ENCODE measurements at regions of chr15 and their contacts with region 1.

Region 1: DNA sequence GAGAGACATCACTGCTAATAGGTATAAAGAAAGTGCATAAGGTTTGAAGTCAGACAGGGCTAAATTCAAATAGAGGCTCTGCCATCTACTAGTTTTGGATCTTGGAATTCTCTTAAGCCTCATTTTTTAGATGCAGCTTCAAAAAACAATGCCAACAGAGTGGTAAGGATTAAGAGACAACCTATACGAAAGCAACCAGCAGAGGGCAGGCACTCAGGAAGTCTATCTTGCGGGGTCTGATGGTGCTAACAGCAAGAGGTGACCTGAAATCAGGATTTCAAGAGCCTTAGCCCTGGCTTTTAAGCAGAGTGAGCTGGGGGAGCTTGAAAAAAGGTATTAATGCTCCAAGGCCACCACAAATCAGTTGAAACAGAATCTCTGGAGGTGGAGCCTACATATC is 40.7 kb downstream of the LDHAL6B start:
- DNase-seq: no peak
- H3K4me3 ChIP-seq: no peak overlapping the region
- CTCF ChIP-seq: peak; percentile 71

Region 2: DNA sequence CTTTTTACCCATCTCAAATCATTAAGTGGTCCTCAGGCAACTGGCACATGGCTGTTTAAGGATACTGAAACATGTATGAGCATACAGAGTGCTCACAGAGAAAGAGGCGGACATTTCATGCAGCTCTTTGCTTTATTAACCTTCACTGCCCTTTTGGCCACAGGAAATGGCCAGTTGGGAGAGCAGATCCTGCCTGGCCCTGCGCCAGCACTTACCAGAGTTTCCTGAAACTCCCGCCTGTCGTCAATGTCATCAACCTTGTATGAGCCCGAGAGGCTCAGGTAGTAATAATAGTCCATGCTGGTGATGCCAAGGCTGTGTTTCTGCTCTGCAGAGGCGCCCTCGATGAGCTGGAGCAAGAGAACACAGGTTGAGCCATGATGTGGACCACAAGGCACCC is 22.9 kb before region 1 on chr15:
- CTCF ChIA-PET with region 1: interaction called, 10 read pairs
- POLR2A ChIA-PET with region 1: no interaction called
- DNase-seq: no peak
- H3K4me3 ChIP-seq: no peak overlapping the region
- CTCF ChIP-seq: no peak

Region 3: GRCh38 chr15:59237119-59237855 is 10.1 kb before region 1 on chr15:
- CTCF ChIA-PET with region 1: interaction called, 35 read pairs
- POLR2A ChIA-PET with region 1: no interaction called
- DNase-seq: no peak
- H3K4me3 ChIP-seq: no peak overlapping the region
- CTCF ChIP-seq: no peak

Region 4: GRCh38 chr15:59299929-59300617 is 52.7 kb after region 1 on chr15:
- CTCF ChIA-PET with region 1: interaction called, 13 read pairs
- POLR2A ChIA-PET with region 1: interaction called, 4 read pairs
- DNase-seq: peak; percentile 84
- H3K4me3 ChIP-seq: no peak overlapping the region
- CTCF ChIP-seq: no peak

Measured in AG04449 (cell line).